Activated CD8-positive, alpha-beta T cell treated with anti-CD3 and anti-CD28 coated beads, Interleukin-2, amount 10 ng/mL, durations not matched to agents 7 days and 5 days (primary cell): ENCODE measurements at regions of chr1 and their contacts with region 1.

Region 1: GRCh38 chr1:86499987-86500593 is 31.4 kb downstream of the CLCA1 start:
- DNase-seq: no peak
- ATAC-seq: peak; percentile 48
- H3K4me3 Mint-ChIP-seq: no peak overlapping the region
- H3K27ac Mint-ChIP-seq: no peak overlapping the region
- H3K4me1 Mint-ChIP-seq: peaks cover 18% of the 10 kb centered on the region
- H3K27me3 Mint-ChIP-seq: peaks cover 20% of the 10 kb centered on the region

Region 2: DNA sequence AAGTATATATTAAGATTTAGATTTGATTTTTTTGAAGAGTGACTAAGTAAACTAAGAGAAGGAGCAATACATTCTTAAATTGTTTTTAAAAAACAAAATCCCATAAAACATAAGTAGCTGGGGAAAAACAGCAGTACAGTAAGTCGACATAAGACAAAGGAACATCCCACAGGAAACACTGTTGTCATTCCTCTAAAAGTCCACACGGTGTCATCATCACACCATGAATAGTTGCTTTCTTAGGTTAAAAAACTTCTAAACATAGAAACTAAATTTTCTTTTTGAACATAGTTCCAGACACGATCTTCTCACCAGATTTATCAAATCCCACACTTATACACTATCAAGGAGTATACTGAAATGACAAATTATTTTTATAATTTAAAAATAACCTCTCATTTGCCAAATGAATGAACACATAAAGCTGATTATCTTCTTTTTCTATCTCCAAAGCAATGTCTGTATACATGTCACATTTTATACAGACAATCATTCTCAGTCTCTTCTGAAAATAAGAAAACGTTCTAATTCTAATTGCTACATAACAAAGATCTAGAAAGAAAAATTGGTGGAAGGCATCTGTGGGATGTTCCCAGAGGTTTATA is 119.7 kb before region 1 on chr1:
- CTCF ChIA-PET with region 1: interaction called, 38 read pairs
- POLR2A ChIA-PET with region 1: no interaction called
- DNase-seq: peak; percentile 40
- ATAC-seq: peak; percentile 57
- H3K4me3 Mint-ChIP-seq: no peak overlapping the region
- H3K27ac Mint-ChIP-seq: no peak overlapping the region
- H3K4me1 Mint-ChIP-seq: peaks cover 14% of the 10 kb centered on the region
- H3K27me3 Mint-ChIP-seq: no peaks in the 10 kb centered on the region

Region 3: GRCh38 chr1:86423873-86424272 is 76.2 kb before region 1 on chr1 and contains the start of gene CLCA2:
- CTCF ChIA-PET with region 1: interaction called, 15 read pairs
- POLR2A ChIA-PET with region 1: no interaction called
- DNase-seq: no peak
- ATAC-seq: no peak
- H3K4me3 Mint-ChIP-seq: no peak within 1 kb of the TSS
- H3K27ac Mint-ChIP-seq: no peak within 1 kb of the TSS
- H3K4me1 Mint-ChIP-seq: peaks cover 5% of the 10 kb centered on the region
- H3K27me3 Mint-ChIP-seq: peaks cover 23% of the 10 kb centered on the region
- total RNA-seq, gene CLCA2: not detected

Region 4: GRCh38 chr1:86429835-86430234 is 70.3 kb before region 1 on chr1:
- CTCF ChIA-PET with region 1: interaction called, 15 read pairs
- POLR2A ChIA-PET with region 1: no interaction called
- DNase-seq: no peak
- ATAC-seq: no peak
- H3K4me3 Mint-ChIP-seq: no peak overlapping the region
- H3K27ac Mint-ChIP-seq: no peak overlapping the region
- H3K4me1 Mint-ChIP-seq: no peaks in the 10 kb centered on the region
- H3K27me3 Mint-ChIP-seq: peaks cover 13% of the 10 kb centered on the region

Region 5: GRCh38 chr1:86470859-86471258 is 29.2 kb before region 1 on chr1:
- CTCF ChIA-PET with region 1: interaction called, 10 read pairs
- POLR2A ChIA-PET with region 1: no interaction called
- DNase-seq: no peak
- ATAC-seq: no peak
- H3K4me3 Mint-ChIP-seq: no peak overlapping the region
- H3K27ac Mint-ChIP-seq: no peak overlapping the region
- H3K4me1 Mint-ChIP-seq: no peaks in the 10 kb centered on the region
- H3K27me3 Mint-ChIP-seq: peaks cover 20% of the 10 kb centered on the region

Region 6: DNA sequence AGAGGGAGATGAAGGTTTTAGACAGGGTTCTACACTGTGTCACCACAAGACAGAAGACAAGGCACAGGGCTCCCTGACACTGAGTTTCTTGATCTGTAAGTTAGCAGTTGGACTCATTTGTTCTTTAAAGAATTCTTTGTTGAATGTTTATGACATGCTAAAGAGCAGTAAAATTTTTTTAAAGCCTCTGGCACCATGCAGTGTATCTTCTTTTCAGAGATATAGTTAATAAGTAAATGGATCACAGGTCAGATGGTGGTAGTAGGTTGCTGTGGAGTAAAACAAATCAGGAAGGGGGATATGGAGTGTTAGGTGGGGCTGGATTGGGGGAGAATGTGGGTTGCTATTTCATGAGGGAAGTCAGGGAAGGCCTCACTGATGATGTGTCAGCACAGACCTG is 48.7 kb after region 1 on chr1:
- CTCF ChIA-PET with region 1: no interaction called
- POLR2A ChIA-PET with region 1: no interaction called
- DNase-seq: no peak
- ATAC-seq: no peak
- H3K4me3 Mint-ChIP-seq: no peak overlapping the region
- H3K27ac Mint-ChIP-seq: no peak overlapping the region
- H3K4me1 Mint-ChIP-seq: no peaks in the 10 kb centered on the region
- H3K27me3 Mint-ChIP-seq: peaks cover 2% of the 10 kb centered on the region